Posterior vena cava (tissue), 2 donors: ENCODE measurements at regions of chr3 and their contacts with region 1.

Region 1: DNA sequence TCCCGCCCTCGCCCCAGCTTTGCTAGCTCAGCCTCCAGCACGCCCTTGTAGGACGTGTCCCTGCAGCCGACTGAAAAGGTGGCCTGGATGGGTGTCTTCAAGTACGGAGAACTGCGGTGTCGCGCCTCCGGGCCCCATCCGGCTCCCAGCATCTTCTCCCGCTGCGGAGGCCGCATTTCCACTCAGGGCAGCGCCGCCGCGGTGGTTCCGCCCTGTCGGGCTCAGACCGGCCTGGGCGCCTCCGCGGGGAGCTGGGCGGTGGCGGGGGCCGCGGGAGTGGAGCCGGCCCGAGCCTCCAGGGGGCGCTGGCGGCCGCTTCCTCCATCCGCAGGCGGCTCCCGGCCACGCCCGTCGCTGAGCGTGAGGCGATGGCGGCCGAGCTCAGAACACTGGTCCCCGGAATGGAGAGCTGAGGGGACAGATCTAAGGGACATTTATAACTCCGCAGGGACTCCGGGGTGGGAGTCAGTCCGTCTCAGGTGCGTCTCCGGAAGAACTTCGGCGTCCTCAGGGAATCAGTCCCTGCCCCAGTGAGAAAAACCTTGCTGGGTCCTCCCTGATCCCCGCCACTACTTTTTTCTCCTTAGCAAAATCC is 13.6 kb upstream of the SMCO1 start:
- DNase-seq: peak; percentile 92

Region 2: GRCh38 chr3:196251918-196252317 is 276.8 kb before region 1 on chr3:
- intact Hi-C with region 1: loop called in 1 of 2 experiments (anchors 10 kb)
- DNase-seq: no peak

Region 3: DNA sequence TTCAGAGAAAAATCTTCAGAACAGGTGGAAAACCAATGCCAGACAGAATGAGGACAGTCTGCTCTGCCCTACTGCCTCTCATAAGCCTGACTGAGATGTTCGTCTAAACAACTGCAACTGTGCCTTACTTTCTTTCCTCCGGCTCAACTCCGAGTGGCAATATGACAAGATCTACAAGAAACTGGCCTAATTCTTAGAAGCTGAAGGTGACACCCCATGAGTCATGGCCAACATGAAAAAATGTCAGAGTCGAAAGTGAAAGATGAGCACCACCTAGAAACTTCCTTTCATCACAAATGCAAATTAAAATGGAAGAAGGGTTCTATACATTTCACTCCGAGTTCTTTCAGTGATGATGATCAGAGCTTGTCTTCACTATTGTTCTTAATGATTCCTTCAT is 254.2 kb before region 1 on chr3:
- intact Hi-C with region 1: loop called in 1 of 2 experiments (anchors 10 kb)
- DNase-seq: no peak